ENCODE measurements at regions of chr2 and their contacts with region 1.

Region 1: DNA sequence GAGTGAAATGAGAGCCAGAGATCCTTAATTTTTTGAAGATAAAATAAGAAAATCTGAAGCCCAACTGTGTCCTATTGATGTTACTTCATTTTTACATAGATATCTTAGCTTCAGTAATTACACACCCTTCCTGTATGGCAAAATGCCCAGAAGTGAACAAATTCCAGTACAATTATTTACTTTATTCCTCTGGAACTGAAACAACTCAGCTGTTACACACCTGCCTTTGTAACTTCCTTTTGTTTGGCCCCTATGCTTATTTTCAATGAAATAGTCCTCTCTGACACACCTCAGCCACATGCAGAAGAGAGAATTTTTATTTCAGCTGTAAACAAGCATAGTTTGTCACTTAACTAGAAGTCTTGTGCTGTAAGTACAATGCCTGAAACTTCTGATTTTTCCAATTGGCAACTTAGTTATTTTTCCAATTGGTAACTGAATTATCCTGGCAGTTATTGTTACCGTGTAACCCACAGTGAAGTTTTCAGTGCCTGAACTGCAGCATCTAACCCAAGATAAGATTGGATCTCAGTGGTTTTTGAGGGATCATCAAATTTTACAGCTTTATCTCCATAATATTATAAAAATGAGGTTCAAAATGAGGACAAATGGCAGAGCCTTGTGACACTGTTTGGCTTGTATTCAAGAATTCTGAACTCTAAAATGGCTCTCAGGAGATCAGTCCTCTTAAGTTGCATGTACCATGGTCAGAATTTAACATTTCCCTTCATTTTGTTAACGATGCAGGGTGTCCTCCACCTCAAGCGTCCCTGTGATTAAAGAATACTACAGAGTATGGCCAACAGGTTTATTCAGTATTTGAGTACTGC is 82.6 kb downstream of the PKP4 start:
- DNase-seq: no peak
- H3K4me3 ChIP-seq: no peak overlapping the region
- H3K27ac ChIP-seq: no peak overlapping the region
- H3K4me1 ChIP-seq: no peaks in the 10 kb centered on the region
- H3K27me3 ChIP-seq: no peaks in the 10 kb centered on the region
- CTCF ChIP-seq: no peak
- EP300 ChIP-seq: no peak
- POLR2A ChIP-seq: no peak

Region 2: DNA sequence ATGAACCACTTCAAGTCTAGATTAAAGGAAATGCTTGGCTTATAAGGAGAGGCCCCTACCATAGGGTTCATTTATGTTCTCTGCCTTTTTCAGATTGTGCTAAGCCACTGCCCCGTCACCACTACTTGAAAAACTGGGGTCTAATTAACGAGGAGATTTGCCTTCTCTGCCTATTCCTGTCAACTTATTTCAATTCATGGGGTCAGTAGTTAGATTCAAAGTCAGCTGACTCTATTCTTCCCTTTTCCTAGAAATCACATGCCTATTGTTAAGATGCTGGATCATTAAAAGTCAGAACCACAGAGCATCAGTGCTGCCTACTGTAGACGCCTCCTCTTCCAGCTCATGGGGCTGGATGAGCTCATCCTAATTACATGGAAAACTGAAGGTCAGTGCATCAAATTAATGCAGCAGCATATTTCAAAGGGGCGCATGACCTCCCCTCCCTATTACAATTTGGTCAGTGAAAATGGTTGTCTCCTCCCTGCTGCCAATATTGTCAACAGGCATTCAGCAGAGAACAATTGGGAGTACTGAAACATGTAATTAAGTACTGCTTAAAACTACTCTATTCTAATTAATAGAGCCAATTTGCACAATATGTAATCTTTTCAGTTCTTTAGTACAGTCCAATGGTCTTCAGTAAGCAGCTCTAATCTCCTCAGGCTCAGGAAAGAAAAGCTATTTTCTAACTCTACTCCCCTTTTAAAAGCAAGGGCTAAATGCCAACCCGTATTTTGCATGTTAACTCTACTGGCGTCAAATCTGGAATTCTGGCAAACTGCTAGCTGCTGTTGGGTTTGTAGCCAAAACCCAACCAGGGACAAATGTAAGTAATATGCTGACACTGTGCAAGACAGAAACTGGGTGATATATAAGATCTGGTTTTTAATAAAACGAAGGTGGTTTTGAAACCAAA is 1778.0 kb after region 1 on chr2:
- intact Hi-C with region 1: loop called in 1 of 4 experiments (anchors 10 kb)
- DNase-seq: peak in 4 of 5 donors; percentile 36 to 62 (median 42)
- H3K4me3 ChIP-seq: no peak overlapping the region
- H3K27ac ChIP-seq: peak overlapping the region in 1 of 2 donors; percentile 65
- H3K4me1 ChIP-seq: peaks cover 14% of the 10 kb centered on the region
- H3K27me3 ChIP-seq: no peaks in the 10 kb centered on the region
- CTCF ChIP-seq: no peak
- EP300 ChIP-seq: no peak
- POLR2A ChIP-seq: no peak